CD4-positive, alpha-beta T cell (primary cell): ENCODE measurements at regions of chr19 and their contacts with region 1.

Region 1: DNA sequence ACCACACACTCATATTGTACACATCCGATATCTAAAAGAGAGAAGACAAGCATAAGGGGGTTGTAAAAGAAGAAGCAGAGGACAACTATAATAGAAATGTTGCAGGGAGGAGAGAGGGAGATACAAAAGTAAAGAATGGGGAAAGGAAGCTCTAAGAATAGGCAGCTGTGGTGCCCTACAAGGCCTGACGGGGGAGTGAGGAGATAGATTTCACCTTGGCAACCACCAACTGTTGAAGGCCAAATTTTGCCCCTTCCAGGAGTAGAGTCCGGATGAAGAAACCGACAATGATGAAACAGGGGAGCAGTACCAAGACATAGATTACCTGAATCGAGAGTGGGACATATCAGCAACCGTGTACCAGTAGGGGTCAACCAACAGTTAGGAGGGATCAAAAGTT is 15.9 kb downstream of the SLC6A16 start:
- DNase-seq: no peak
- ATAC-seq: no peak
- H3K4me3 ChIP-seq: no peak overlapping the region
- H3K4me3 Mint-ChIP-seq: no peak overlapping the region
- H3K27ac ChIP-seq: no peak overlapping the region
- H3K27ac Mint-ChIP-seq: no peak overlapping the region
- H3K4me1 ChIP-seq: no peaks in the 10 kb centered on the region
- H3K4me1 Mint-ChIP-seq: no peaks in the 10 kb centered on the region
- H3K27me3 ChIP-seq: no peaks in the 10 kb centered on the region
- H3K27me3 Mint-ChIP-seq: no peaks in the 10 kb centered on the region
- CTCF ChIP-seq: no peak

Region 2: GRCh38 chr19:49287141-49287770 is 21.8 kb before region 1 on chr19:
- CTCF ChIA-PET with region 1: no interaction called
- POLR2A ChIA-PET with region 1: no interaction called
- intact Hi-C with region 1: no loop called
- DNase-seq: no peak
- ATAC-seq: no peak
- H3K4me3 ChIP-seq: no peak overlapping the region
- H3K4me3 Mint-ChIP-seq: no peak overlapping the region
- H3K27ac ChIP-seq: no peak overlapping the region
- H3K27ac Mint-ChIP-seq: no peak overlapping the region
- H3K4me1 ChIP-seq: no peaks in the 10 kb centered on the region
- H3K4me1 Mint-ChIP-seq: no peaks in the 10 kb centered on the region
- H3K27me3 ChIP-seq: no peaks in the 10 kb centered on the region
- H3K27me3 Mint-ChIP-seq: no peaks in the 10 kb centered on the region
- CTCF ChIP-seq: no peak

Region 3: DNA sequence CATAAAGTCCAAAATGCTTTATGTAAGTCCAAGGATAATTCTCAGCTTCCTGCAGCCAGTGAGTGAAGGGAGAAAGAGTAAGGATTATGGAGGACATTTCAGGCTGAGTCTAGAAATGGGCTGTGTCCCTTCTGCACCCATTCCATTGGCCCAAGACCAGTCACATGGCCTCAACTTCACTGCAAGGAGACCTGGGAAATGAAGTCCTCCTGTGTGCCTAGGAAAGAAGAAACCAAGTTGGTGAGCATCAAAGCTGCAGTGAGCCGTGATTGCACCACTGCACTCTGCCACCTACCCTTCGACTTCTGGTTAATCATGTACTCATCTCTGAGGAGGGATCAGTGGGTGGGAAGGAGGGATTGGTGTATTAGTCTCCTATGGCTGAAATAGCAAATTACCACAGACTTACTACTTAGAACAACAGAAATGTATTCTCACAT is 22.5 kb after region 1 on chr19:
- CTCF ChIA-PET with region 1: interaction called, 3 read pairs
- POLR2A ChIA-PET with region 1: no interaction called
- intact Hi-C with region 1: loop called in 1 of 2 experiments (anchors 2 kb)
- DNase-seq: peak; percentile 33 to 88 (median 49)
- ATAC-seq: peak; percentile 72
- H3K4me3 ChIP-seq: no peak overlapping the region
- H3K4me3 Mint-ChIP-seq: peak overlapping the region; percentile 72
- H3K27ac ChIP-seq: no peak overlapping the region
- H3K27ac Mint-ChIP-seq: peak overlapping the region; percentile 93
- H3K4me1 ChIP-seq: peaks cover 63% of the 10 kb centered on the region
- H3K4me1 Mint-ChIP-seq: peaks cover 79% of the 10 kb centered on the region
- H3K27me3 ChIP-seq: no peaks in the 10 kb centered on the region
- H3K27me3 Mint-ChIP-seq: no peaks in the 10 kb centered on the region
- CTCF ChIP-seq: no peak